CD4-positive, alpha-beta T cell (primary cell): ENCODE measurements at regions of chr7 and their contacts with region 1.

Region 1: DNA sequence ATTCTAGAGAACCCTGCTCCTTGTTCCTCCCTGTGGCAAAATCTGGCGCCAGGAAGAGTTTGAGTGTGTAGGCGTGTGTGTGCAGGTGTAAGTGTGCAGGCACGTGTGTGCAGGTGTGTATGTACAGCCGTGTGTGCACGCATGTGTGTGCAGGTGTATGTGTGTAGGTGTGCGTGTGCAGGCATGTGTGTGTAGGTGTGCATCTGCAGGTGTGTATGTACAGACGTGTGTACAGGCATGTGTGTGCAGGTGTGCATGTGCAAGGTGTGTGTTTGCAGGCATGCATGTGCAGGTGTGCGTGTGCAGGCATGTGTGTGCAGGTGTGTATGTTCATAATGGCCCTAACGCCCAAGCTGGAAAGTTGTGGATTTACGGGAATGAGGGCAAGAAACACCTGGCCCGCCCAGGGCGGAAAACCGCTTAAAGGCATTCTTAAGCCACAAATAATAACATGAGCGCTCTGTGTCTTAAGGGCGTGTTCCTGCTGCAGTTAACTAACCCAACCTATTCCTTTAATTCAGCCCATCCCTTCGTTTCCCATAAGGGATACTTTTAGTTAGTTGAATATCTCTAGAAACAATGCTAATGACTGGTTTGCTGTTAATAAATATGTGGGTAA is 34.1 kb downstream of the KCTD7 start:
- DNase-seq: no peak
- ATAC-seq: no peak
- H3K4me3 ChIP-seq: no peak overlapping the region
- H3K4me3 Mint-ChIP-seq: no peak overlapping the region
- H3K27ac ChIP-seq: no peak overlapping the region
- H3K27ac Mint-ChIP-seq: no peak overlapping the region
- H3K4me1 ChIP-seq: no peaks in the 10 kb centered on the region
- H3K4me1 Mint-ChIP-seq: peaks cover 8% of the 10 kb centered on the region
- H3K27me3 ChIP-seq: no peaks in the 10 kb centered on the region
- H3K27me3 Mint-ChIP-seq: no peaks in the 10 kb centered on the region
- CTCF ChIP-seq: no peak

Region 2: DNA sequence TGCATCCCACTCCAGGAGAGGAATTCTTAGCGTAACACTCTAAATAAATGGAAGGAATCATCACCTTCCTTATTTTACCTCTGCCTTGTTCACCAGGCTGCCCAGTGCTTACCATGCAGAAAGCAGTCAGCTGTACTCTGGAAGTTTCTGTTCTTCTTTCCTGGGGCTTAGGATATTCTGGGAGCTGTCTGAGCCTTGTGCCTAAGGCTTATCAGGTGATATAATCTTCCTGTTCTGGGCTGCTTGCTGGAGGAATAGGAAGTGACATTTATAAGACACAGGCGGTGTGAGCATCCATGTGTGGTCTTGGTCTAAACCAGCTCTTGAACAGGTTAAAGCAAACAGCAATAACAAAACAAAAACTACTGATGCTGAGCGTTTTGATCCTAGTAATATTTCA is 20.6 kb before region 1 on chr7:
- CTCF ChIA-PET with region 1: no interaction called
- POLR2A ChIA-PET with region 1: no interaction called
- intact Hi-C with region 1: loop called in 1 of 2 experiments (anchors 2 kb)
- DNase-seq: no peak
- ATAC-seq: no peak
- H3K4me3 ChIP-seq: no peak overlapping the region
- H3K4me3 Mint-ChIP-seq: no peak overlapping the region
- H3K27ac ChIP-seq: no peak overlapping the region
- H3K27ac Mint-ChIP-seq: no peak overlapping the region
- H3K4me1 ChIP-seq: no peaks in the 10 kb centered on the region
- H3K4me1 Mint-ChIP-seq: peaks cover 21% of the 10 kb centered on the region
- H3K27me3 ChIP-seq: no peaks in the 10 kb centered on the region
- H3K27me3 Mint-ChIP-seq: no peaks in the 10 kb centered on the region
- CTCF ChIP-seq: no peak

Region 3: GRCh38 chr7:66952343-66953043 is 289.7 kb after region 1 on chr7:
- CTCF ChIA-PET with region 1: no interaction called
- POLR2A ChIA-PET with region 1: no interaction called
- intact Hi-C with region 1: no loop called
- DNase-seq: no peak
- ATAC-seq: no peak
- H3K4me3 ChIP-seq: no peak overlapping the region
- H3K4me3 Mint-ChIP-seq: no peak overlapping the region
- H3K27ac ChIP-seq: no peak overlapping the region
- H3K27ac Mint-ChIP-seq: no peak overlapping the region
- H3K4me1 ChIP-seq: no peaks in the 10 kb centered on the region
- H3K4me1 Mint-ChIP-seq: no peaks in the 10 kb centered on the region
- H3K27me3 ChIP-seq: no peaks in the 10 kb centered on the region
- H3K27me3 Mint-ChIP-seq: no peaks in the 10 kb centered on the region
- CTCF ChIP-seq: no peak